Dorsolateral prefrontal cortex (tissue), 120 donors: ENCODE measurements at regions of chr4 and their contacts with region 1.

Region 1: GRCh38 chr4:38319456-38320342 is 344.3 kb upstream of the KLF3 start:
- DNase-seq: peak; percentile 69 to 90 (median 88)
- H3K4me3 ChIP-seq: peak overlapping the region in 53 of 59 donors; percentile 2 to 61 (median 46)
- H3K27ac ChIP-seq: peak overlapping the region in 58 of 59 donors; percentile 44 to 94 (median 85)
- H3K27me3 ChIP-seq: no peaks in the 10 kb centered on the region
- CTCF ChIP-seq: peak; percentile 86 to 99 (median 97)

Region 2: DNA sequence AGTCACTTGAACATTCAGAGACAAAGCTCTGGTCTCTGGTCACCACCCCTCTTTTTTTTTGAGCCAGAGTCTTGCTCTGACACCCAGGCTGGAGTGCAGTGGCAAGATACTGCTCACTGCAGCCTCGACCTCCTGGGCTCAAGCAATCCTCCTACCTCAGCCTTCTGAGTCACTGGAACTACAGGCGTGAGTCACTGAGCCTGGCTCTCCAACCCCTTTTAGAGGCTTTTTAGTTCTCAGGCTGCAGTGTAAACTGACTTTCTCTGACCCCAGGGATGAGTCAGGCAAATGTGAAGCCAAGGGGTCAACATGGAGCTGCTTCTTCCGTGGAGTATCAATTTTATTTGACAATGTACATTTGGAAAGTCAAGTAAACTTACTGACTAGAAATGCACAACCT is 130.3 kb before region 1 on chr4:
- intact Hi-C with region 1: loop called (anchors 5 kb)
- DNase-seq: no peak
- H3K4me3 ChIP-seq: no peak overlapping the region
- H3K27ac ChIP-seq: peak overlapping the region in 26 of 59 donors; percentile 4 to 90 (median 80)
- H3K27me3 ChIP-seq: no peaks in the 10 kb centered on the region
- CTCF ChIP-seq: no peak

Region 3: GRCh38 chr4:38223782-38224236 is 95.9 kb before region 1 on chr4:
- intact Hi-C with region 1: loop called in 1 of 2 experiments (anchors 5 kb)
- DNase-seq: peak; percentile 12 to 81 (median 71)
- H3K4me3 ChIP-seq: peak overlapping the region in 42 of 59 donors; percentile 4 to 59 (median 32)
- H3K27ac ChIP-seq: peak overlapping the region; percentile 72 to 99 (median 94)
- H3K27me3 ChIP-seq: no peaks in the 10 kb centered on the region
- CTCF ChIP-seq: peak in 4 of 56 donors; percentile 5 to 26 (median 16)

Region 4: DNA sequence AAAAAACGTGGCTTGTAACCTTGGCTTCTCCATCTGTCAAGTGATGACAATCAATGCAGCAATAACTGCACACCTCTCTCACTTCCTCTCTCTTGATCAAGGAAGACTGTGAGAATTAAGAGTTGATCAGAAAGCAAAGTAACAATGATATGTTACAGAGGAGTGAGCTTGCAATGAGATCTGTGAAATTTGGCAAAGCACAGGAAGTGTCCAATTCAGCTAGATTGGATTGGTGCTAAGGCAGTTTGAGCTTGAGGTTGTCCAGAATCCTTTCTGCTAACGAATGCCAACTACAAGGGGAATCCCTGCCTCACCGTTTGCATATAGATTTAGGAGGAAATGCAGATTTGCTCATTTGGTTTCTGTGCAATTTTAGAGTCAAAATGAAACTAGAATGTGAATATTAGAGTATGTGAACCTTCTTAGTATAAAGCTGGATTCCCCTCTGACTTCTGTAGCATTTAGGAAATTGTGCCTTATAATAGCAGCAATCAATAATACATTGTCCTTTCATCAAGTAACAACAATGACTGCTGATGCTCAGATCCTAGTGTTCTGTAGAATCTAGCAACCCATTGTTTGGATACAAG is 13.1 kb before region 1 on chr4:
- intact Hi-C with region 1: no loop called
- DNase-seq: no peak
- H3K4me3 ChIP-seq: peak overlapping the region in 15 of 59 donors; percentile 1 to 38 (median 21)
- H3K27ac ChIP-seq: peak overlapping the region; percentile 31 to 99 (median 94)
- H3K27me3 ChIP-seq: no peaks in the 10 kb centered on the region
- CTCF ChIP-seq: peak in 3 of 56 donors; percentile 14 to 22 (median 18)

Region 5: GRCh38 chr4:38387348-38387747 is 67.6 kb after region 1 on chr4:
- intact Hi-C with region 1: no loop called
- DNase-seq: peak in 3 of 10 donors; percentile 15 to 35 (median 27)
- H3K4me3 ChIP-seq: no peak overlapping the region
- H3K27ac ChIP-seq: no peak overlapping the region
- H3K27me3 ChIP-seq: no peaks in the 10 kb centered on the region
- CTCF ChIP-seq: no peak

Region 6: GRCh38 chr4:38469410-38469809 is 149.7 kb after region 1 on chr4:
- intact Hi-C with region 1: no loop called
- DNase-seq: no peak
- H3K4me3 ChIP-seq: no peak overlapping the region
- H3K27ac ChIP-seq: no peak overlapping the region
- H3K27me3 ChIP-seq: no peaks in the 10 kb centered on the region
- CTCF ChIP-seq: no peak

Region 7: GRCh38 chr4:38529189-38530115 is 209.8 kb after region 1 on chr4:
- intact Hi-C with region 1: no loop called
- DNase-seq: no peak
- H3K4me3 ChIP-seq: no peak overlapping the region
- H3K27ac ChIP-seq: peak overlapping the region in 33 of 59 donors; percentile 10 to 80 (median 49)
- H3K27me3 ChIP-seq: peaks cover 0 to 2% (median 0%) of the 10 kb centered on the region in 45 donors
- CTCF ChIP-seq: no peak

Region 8: DNA sequence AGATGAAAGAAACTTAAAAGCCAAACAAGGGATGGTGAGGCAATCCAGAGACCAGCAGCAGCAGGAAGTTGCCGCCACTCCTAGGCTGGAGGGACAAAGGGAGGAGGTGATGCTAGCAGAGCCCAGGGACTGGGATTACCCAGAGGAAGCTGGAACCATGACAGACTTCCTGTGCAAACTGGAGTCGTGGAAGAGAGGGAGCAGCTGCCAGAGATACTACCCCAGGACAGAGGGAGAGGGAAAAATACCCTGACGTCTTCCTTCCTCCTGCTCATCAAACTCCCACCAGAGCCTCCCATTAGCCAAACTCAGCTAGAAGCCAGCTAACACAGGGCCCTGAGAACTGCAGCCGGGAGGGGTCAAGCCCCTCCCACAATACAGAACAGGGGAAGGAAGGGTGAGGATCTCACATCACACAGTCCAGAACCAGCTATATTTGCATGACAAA is 243.1 kb after region 1 on chr4:
- intact Hi-C with region 1: loop called in 1 of 2 experiments (anchors 10 kb)
- DNase-seq: no peak
- H3K4me3 ChIP-seq: no peak overlapping the region
- H3K27ac ChIP-seq: peak overlapping the region in 14 of 59 donors; percentile 3 to 89 (median 24)
- H3K27me3 ChIP-seq: no peaks in the 10 kb centered on the region
- CTCF ChIP-seq: no peak

Region 9: GRCh38 chr4:38675146-38676121 is 355.7 kb after region 1 on chr4:
- intact Hi-C with region 1: loop called (anchors 2 to 5 kb)
- DNase-seq: peak; percentile 46 to 94 (median 78)
- H3K4me3 ChIP-seq: peak overlapping the region in 9 of 59 donors; percentile 9 to 42 (median 21)
- H3K27ac ChIP-seq: peak overlapping the region in 57 of 59 donors; percentile 22 to 100 (median 97)
- H3K27me3 ChIP-seq: no peaks in the 10 kb centered on the region
- CTCF ChIP-seq: peak; percentile 83 to 99 (median 94)